ENCODE measurements at regions of chr11 and their contacts with region 1.

Region 1: GRCh38 chr11:72821883-72822799 is 7.9 kb downstream of the ATG16L2 start:
- DNase-seq: peak; percentile 81
- H3K4me3 ChIP-seq: peak overlapping the region; percentile 26 to 63 (median 45)
- H3K27ac ChIP-seq: no peak overlapping the region
- H3K4me1 ChIP-seq: peaks cover 18% of the 10 kb centered on the region
- H3K27me3 ChIP-seq: no peaks in the 10 kb centered on the region
- CTCF ChIP-seq: no peak

Region 2: GRCh38 chr11:72871119-72871518 is 49.0 kb after region 1 on chr11:
- CTCF ChIA-PET with region 1: no interaction called
- dilution Hi-C with region 1: loop called (anchors 5 kb)
- in situ Hi-C with region 1: no loop called
- intact Hi-C with region 1: no loop called
- DNase-seq: no peak
- H3K4me3 ChIP-seq: no peak overlapping the region
- H3K27ac ChIP-seq: no peak overlapping the region
- H3K4me1 ChIP-seq: no peaks in the 10 kb centered on the region
- H3K27me3 ChIP-seq: no peaks in the 10 kb centered on the region
- CTCF ChIP-seq: no peak

Region 3: DNA sequence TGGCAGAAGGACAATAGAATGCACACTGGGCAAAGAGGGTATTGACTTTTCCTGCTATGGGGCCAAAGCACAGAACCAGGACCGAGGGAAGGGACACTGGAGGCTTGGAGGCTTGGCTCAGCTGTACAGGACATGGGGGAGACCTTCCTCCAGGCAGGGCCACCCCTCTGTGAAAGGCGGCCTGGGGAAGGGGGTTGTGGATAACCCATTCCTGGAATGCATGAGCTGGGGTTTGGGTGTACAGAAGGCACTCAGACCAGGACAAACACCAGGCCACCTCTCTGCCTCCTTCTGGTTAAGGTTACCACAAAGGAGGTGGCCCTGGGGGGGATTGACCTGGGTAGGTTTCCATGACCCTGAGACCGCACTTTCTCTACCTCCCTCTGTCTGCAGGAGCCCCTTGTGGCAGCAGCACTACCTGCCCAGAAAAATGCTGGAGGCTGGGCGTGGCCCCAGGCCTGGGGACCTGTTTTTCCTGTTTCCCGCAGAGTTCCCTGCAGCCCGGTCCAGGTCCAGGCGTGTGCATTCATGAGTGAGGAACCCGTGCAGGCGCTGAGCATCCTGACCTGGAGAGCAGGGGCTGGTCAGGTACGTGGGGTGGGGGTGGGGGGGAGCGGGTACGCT is 405.6 kb after region 1 on chr11:
- CTCF ChIA-PET with region 1: no interaction called
- dilution Hi-C with region 1: loop called (anchors 5 kb)
- in situ Hi-C with region 1: no loop called
- intact Hi-C with region 1: no loop called
- DNase-seq: peak; percentile 81
- H3K4me3 ChIP-seq: no peak overlapping the region
- H3K27ac ChIP-seq: no peak overlapping the region
- H3K4me1 ChIP-seq: peaks cover 19% of the 10 kb centered on the region
- H3K27me3 ChIP-seq: no peaks in the 10 kb centered on the region
- CTCF ChIP-seq: peak; percentile 47 to 68